ENCODE measurements at regions of chr1 and their contacts with region 1.

Region 1: GRCh38 chr1:153094426-153094825 is at the start of gene SPRR2E:
- DNase-seq: no peak
- ATAC-seq: no peak
- H3K4me3 ChIP-seq: no peak within 1 kb of the TSS
- H3K4me3 Mint-ChIP-seq: no peak within 1 kb of the TSS
- H3K27ac ChIP-seq: no peak within 1 kb of the TSS
- H3K27ac Mint-ChIP-seq: no peak within 1 kb of the TSS
- H3K4me1 ChIP-seq: no peaks in the 10 kb centered on the region
- H3K4me1 Mint-ChIP-seq: no peaks in the 10 kb centered on the region
- H3K27me3 ChIP-seq: no peaks in the 10 kb centered on the region
- H3K27me3 Mint-ChIP-seq: peaks cover 6 to 33% (median 26%) of the 10 kb centered on the region in 5 donors
- total RNA-seq, gene SPRR2E: not detected

Region 2: DNA sequence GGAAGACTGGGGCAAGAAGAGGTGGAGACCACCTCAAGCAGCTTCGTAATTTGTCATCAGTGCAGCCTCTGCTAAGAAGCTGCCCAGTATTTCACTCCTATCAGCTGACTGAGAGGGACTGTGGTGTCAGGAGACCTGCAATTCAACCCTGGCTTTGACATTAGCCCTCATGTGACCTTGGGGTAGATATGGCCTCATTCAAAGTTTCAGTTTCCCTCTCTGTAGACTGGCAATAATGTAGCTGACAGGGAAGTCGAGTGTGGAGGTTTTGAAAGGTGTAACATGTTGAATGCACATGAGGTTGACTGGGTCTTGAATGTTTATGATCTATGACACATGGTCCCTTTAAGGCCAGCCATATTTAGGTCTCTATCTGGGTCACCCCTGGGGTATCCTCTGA is 126.2 kb before region 1 on chr1:
- CTCF ChIA-PET with region 1: no interaction called
- POLR2A ChIA-PET with region 1: no interaction called
- intact Hi-C with region 1: no loop called
- DNase-seq: no peak
- ATAC-seq: no peak
- H3K4me3 ChIP-seq: no peak overlapping the region
- H3K4me3 Mint-ChIP-seq: no peak overlapping the region
- H3K27ac ChIP-seq: no peak overlapping the region
- H3K27ac Mint-ChIP-seq: no peak overlapping the region
- H3K4me1 ChIP-seq: no peaks in the 10 kb centered on the region
- H3K4me1 Mint-ChIP-seq: no peaks in the 10 kb centered on the region
- H3K27me3 ChIP-seq: no peaks in the 10 kb centered on the region
- H3K27me3 Mint-ChIP-seq: peaks cover 0 to 57% (median 29%) of the 10 kb centered on the region in 5 donors

Region 3: GRCh38 chr1:153071511-153071910 is 22.9 kb before region 1 on chr1 and contains the start of gene SPRR2B:
- CTCF ChIA-PET with region 1: no interaction called
- POLR2A ChIA-PET with region 1: no interaction called
- intact Hi-C with region 1: loop called in 1 of 2 experiments (anchors 1 kb)
- DNase-seq: no peak
- ATAC-seq: no peak
- H3K4me3 ChIP-seq: no peak within 1 kb of the TSS
- H3K4me3 Mint-ChIP-seq: no peak within 1 kb of the TSS
- H3K27ac ChIP-seq: no peak within 1 kb of the TSS
- H3K27ac Mint-ChIP-seq: no peak within 1 kb of the TSS
- H3K4me1 ChIP-seq: no peaks in the 10 kb centered on the region
- H3K4me1 Mint-ChIP-seq: no peaks in the 10 kb centered on the region
- H3K27me3 ChIP-seq: no peaks in the 10 kb centered on the region
- H3K27me3 Mint-ChIP-seq: peaks cover 5 to 32% (median 30%) of the 10 kb centered on the region in 5 donors
- total RNA-seq, gene SPRR2B: not detected

Region 4: DNA sequence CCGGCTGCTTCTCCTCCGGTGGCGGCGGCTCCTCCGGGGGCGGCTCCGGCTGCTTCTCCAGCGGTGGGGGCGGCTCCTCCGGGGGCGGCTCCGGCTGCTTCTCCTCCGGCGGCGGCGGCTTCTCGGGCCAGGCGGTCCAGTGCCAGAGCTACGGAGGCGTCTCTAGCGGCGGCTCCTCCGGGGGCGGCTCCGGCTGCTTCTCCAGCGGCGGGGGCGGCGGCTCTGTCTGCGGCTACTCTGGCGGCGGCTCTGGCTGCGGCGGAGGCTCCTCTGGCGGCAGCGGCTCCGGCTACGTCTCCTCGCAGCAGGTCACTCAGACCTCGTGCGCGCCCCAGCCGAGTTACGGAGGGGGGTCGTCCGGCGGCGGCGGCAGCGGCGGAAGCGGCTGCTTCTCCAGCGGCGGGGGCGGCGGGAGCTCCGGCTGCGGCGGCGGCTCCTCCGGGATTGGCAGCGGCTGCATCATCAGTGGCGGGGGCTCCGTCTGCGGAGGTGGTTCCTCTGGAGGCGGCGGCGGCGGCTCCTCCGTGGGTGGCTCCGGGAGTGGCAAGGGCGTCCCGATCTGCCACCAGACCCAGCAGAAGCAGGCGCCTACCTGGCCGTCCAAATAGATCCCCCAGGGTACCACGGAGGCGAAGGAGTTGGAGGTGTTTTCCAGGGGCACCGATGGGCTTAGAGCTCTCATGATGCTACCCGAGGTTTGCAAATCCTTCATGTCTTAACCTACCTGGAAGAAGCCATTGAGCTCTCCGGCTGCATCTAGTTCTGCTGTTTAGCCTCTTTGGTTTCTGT is 167.0 kb after region 1 on chr1:
- CTCF ChIA-PET with region 1: no interaction called
- POLR2A ChIA-PET with region 1: no interaction called
- intact Hi-C with region 1: no loop called
- DNase-seq: peak in 6 of 9 donors; percentile 11 to 36 (median 22)
- ATAC-seq: peak; percentile 51
- H3K4me3 ChIP-seq: no peak overlapping the region
- H3K4me3 Mint-ChIP-seq: peak overlapping the region; percentile 62 to 89 (median 72)
- H3K27ac ChIP-seq: no peak overlapping the region
- H3K27ac Mint-ChIP-seq: no peak overlapping the region
- H3K4me1 ChIP-seq: peaks cover 9 to 15% of the 10 kb centered on the region in 2 donors
- H3K4me1 Mint-ChIP-seq: peaks cover 20 to 32% (median 25%) of the 10 kb centered on the region in 7 donors
- H3K27me3 ChIP-seq: peaks cover 0 to 6% of the 10 kb centered on the region in 2 donors
- H3K27me3 Mint-ChIP-seq: peaks cover 41 to 71% (median 51%) of the 10 kb centered on the region in 5 donors

Measured in naive thymus-derived CD4-positive, alpha-beta T cell (primary cell).